ENCODE measurements at regions of chr10 and their contacts with region 1.

Region 1: DNA sequence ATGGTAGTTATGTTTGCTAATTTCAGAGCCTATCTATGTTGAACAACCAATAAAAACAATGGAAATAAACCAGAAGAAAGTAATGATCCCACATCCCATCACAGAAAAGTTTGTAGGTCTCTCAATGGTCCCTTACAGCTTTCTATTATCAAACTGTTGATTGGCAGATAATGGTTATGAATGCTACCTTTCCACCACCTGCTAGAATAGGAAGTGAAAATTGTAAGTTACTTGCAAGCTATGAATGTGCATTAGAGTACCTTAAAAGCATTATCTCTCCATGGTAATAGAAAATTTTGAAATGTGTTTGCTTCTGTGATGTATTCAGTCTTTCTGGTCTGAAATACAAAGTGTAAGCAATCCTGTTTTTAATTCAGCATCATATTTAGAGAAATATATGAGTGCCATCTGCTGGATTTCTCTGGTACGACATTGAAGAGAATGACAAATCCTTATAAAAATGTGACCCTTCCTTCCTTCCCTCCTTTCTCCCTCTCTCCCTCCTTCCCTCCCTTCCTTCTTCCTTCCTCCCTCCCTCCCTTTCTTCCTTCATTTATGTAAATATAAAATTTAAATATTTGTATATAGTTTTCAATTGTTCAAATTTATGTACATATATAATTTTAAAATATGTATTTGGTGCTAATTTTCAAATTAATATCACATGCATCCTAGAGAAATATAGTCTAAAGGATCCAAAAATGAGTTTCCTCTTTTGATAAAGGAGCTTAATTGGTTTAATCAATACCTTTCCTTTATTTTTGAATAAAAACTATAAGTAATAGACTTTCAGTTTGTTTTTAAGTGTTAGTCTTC is 41.4 kb upstream of the PNLIPRP3 start:
- DNase-seq: no peak
- H3K4me3 Mint-ChIP-seq: no peak overlapping the region
- H3K27ac Mint-ChIP-seq: no peak overlapping the region
- H3K4me1 Mint-ChIP-seq: no peaks in the 10 kb centered on the region
- H3K27me3 Mint-ChIP-seq: no peaks in the 10 kb centered on the region

Region 2: GRCh38 chr10:115171392-115171960 is 1214.7 kb before region 1 on chr10:
- CTCF ChIA-PET with region 1: interaction called, 10 read pairs
- POLR2A ChIA-PET with region 1: no interaction called
- intact Hi-C with region 1: loop called (anchors 1 kb)
- DNase-seq: no peak
- H3K4me3 Mint-ChIP-seq: no peak overlapping the region
- H3K27ac Mint-ChIP-seq: no peak overlapping the region
- H3K4me1 Mint-ChIP-seq: no peaks in the 10 kb centered on the region
- H3K27me3 Mint-ChIP-seq: no peaks in the 10 kb centered on the region

Region 3: DNA sequence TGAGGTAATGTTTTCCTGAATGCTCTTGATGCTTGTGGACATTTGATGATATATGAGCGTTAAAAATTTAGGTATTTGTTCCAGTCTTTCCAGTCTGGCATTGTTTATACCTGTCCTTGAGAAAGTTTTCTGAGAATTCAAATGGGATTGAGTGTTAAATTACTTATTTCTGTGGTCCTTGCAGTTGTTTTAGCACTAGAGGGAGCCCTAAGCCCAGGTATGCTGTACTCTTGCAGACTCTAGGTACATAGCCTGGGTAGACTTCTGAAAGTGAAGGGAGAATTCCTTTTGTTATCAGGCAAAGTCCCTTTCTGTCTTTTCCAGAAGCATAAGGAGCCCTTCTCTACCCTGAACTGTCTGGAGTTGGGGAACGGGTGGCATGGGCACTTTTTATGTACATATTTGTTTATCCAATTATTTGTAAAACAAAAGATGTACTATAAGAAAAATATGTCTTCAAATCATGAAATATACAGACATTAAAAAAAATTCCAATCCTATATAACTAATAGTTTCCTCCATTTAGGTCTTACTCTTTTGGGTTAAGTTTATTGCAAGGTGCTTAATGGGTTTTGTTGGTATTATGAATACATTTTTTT is 1030.9 kb before region 1 on chr10:
- CTCF ChIA-PET with region 1: no interaction called
- POLR2A ChIA-PET with region 1: no interaction called
- intact Hi-C with region 1: loop called (anchors 2 kb)
- DNase-seq: peak; percentile 12
- H3K4me3 Mint-ChIP-seq: no peak overlapping the region
- H3K27ac Mint-ChIP-seq: no peak overlapping the region
- H3K4me1 Mint-ChIP-seq: no peaks in the 10 kb centered on the region
- H3K27me3 Mint-ChIP-seq: no peaks in the 10 kb centered on the region

Region 4: GRCh38 chr10:115706026-115706781 is 680.0 kb before region 1 on chr10:
- CTCF ChIA-PET with region 1: no interaction called
- POLR2A ChIA-PET with region 1: no interaction called
- intact Hi-C with region 1: loop called (anchors 5 kb)
- DNase-seq: no peak
- H3K4me3 Mint-ChIP-seq: no peak overlapping the region
- H3K27ac Mint-ChIP-seq: no peak overlapping the region
- H3K4me1 Mint-ChIP-seq: no peaks in the 10 kb centered on the region
- H3K27me3 Mint-ChIP-seq: no peaks in the 10 kb centered on the region

Region 5: DNA sequence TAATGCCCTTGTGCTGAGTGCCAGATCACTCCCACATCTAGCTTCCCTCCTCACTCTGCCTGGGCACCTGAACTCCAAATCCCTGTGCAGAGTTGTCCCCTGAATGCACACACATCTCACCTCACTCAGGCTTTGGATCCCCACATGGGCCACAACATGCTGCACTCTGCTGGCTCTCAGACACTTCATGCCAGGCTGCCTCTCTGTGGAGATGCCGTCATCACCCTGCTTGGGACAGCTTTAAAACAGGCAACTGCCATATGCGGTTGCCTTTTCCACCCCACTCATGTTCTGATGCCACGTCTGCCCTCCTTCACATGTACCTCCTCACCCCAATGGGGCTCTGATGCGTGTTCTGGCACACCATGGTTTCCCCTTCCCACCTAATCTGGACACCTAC is 590.2 kb before region 1 on chr10:
- CTCF ChIA-PET with region 1: no interaction called
- POLR2A ChIA-PET with region 1: no interaction called
- intact Hi-C with region 1: loop called (anchors 5 kb)
- DNase-seq: no peak
- H3K4me3 Mint-ChIP-seq: no peak overlapping the region
- H3K27ac Mint-ChIP-seq: no peak overlapping the region
- H3K4me1 Mint-ChIP-seq: no peaks in the 10 kb centered on the region
- H3K27me3 Mint-ChIP-seq: no peaks in the 10 kb centered on the region